AG04449 (cell line): ENCODE measurements at regions of chr2 and their contacts with region 1.

Region 1: DNA sequence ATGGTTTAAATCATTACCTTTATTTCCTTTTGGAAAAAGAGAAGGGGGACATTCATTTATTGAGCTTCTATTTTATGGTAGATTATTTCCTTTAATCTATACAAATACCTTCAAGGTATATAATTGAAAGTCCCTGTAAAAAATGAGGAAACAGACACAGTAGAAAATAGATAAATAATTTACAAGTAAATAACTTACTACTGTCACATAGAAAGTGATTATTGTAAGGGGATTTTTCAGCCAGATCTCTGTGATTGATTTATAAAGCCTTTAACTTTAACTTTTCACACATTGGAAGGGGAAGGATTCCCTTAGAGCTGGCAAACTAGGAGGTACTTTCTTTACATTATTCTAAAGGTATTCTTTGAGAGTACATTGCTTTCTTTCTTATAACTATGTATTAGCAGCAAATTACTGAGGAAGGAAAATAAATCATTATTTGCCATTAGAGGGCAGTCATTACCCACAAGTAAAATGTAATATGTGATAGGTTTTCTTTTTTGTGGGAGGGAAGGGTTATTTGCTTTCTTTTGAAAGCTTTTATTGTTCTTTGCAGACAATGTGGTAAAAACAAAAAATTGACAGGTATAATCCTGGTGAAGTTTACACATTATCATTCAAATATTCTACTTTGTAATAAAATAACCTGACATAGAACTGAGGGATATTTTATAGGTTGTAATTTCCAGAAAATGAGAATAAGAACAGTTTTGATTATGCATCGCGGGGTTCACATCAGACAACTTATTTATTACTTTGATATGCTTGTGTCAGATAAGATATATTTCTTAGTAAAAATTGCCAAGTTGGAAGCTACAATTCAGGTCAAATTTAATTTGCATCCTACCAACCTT is 24.8 kb upstream of the RPE start:
- DNase-seq: no peak
- H3K4me3 ChIP-seq: no peak overlapping the region
- CTCF ChIP-seq: peak; percentile 5

Region 2: GRCh38 chr2:209091056-209091455 is 886.6 kb before region 1 on chr2:
- CTCF ChIA-PET with region 1: no interaction called
- POLR2A ChIA-PET with region 1: no interaction called
- DNase-seq: no peak
- H3K4me3 ChIP-seq: no peak overlapping the region
- CTCF ChIP-seq: no peak

Region 3: DNA sequence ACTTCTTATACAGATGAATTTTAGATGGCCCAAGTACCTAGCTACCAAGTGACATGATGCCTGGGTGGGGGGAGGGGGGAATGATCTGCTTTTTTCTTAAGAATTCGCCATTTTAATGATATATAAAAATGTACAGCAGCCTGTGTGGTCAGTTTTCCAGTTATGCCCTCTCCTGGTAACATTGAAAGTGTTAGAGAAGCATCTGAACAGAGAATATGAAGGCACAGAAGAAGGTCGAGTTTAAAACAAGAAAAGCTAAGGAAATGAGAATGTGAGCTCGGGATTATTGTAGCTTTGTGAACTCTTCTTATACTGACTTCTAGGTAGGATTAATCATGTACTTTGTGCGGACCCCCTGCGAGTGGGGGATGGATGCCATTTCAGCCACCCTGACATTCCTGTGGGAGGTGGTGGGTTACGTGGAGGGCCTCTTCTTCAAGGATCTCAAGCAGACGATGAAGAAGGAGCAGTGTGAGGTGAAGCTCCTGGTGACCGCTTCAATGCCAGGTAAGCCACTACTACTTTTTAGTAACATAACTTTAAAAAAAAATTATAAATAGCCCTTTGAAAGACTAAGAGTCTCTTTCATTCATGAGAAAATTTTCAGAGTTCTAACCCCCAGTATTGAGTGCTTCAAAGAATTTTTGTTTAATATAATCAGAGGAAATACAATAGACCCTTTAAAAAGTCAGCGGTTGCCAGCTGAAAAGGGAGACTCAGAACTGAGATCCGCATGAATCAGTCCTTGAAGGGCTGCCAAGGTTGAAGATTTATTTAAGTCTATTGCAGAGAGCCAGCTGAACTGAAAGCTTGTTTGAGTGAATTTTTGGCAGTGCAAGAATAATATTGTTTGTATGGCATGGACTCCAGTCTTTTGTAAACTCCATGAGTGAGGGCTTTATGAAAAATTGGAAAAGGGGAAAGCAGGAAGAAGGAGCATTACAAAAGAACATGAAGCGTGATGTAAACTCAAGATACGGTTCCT is 43.8 kb before region 1 on chr2:
- CTCF ChIA-PET with region 1: no interaction called
- POLR2A ChIA-PET with region 1: no interaction called
- DNase-seq: no peak
- H3K4me3 ChIP-seq: no peak overlapping the region
- CTCF ChIP-seq: no peak

Region 4: DNA sequence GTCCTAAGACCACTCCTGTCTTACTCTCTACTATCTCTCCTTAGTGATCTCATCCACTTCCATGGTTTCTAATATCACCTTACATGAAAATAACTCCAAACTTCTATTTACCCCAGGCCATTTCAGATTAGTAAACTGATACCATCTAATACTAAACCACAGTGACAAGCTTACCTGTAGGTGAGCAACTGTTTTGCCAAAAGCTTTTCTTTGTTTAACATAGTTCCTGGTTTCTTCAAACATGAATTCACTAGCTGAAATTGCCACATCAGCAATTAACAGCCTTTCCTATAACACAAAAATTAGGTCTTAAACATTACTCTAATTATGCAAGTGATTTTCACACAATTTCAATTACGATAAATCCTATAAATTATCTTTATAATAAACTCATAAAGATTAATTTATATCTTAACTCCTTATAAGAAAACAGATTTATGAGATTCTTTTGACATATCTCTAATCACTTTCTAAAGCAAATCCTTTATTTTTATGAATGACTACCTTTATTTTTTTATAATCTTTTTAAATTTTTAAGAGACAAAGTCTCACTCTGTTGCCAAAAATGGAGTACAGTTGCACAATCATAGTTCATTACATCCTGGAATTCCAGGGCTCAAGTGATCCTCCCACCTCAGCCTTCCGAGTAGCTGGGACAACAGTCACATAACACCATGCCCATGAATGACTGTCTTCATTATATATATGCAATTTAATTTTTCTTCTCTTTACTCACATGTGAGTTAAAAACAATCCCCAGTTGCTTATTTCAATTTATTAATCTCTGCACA is 225.7 kb after region 1 on chr2:
- CTCF ChIA-PET with region 1: interaction called, 101 read pairs
- POLR2A ChIA-PET with region 1: no interaction called
- DNase-seq: no peak
- H3K4me3 ChIP-seq: no peak overlapping the region
- CTCF ChIP-seq: no peak

Region 5: DNA sequence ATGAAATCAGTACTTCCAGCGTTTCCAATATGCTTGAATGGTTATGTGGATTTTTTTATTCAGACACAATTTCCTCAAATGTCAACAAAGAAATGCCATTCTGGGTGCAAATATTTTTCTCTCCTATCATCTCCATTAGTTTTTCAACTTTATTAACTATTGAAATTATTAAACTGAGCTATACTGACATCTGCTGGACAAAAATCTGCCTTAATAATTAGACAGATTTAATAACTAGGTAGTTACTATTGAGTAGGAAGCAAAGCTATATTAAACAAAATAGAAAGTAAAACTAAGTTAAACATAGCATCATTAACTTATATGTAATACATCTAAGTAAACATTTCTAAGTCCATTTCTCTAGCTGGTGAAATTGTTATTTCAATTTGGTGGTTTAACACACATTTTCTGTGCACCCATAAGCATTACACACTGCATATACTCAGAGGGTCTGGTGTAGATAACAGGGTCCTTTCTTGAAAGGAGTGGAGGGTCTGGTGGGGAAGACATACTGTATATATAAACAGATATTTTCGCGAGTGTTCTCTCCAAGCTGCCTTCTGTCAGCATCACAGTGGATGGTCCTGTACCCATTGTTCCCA is 421.9 kb after region 1 on chr2:
- CTCF ChIA-PET with region 1: interaction called, 10 read pairs
- POLR2A ChIA-PET with region 1: no interaction called
- DNase-seq: no peak
- H3K4me3 ChIP-seq: no peak overlapping the region
- CTCF ChIP-seq: no peak

Region 6: DNA sequence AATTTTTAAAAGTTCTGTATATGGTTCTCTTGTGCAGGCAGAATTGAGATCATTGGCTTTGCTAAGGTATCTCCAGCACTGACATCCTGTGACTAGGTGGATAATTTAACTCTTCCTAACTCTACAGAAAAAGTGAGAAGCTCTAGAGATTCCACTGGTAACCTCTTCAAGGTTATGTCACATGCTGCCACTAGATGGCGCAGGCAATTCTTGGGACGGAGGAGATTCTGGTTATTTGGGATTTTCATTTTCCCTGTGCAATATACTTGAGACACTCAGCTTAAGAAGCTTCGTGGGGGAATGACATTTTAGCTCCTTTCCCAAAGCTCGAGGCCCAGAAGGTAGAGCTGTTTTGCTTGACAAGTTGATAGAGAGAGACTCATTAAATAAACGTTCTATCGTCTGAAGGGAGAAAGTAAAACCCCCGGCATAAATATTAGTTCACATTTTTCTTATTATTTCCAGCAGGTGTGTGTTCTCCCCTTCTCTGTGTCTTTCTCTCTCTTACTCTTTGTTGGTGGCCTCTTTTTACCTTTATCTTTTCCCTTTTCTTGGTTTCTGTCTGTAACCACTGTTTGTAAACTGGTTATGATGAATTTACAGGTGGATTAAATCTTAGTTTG is 525.5 kb after region 1 on chr2:
- CTCF ChIA-PET with region 1: no interaction called
- POLR2A ChIA-PET with region 1: no interaction called
- DNase-seq: no peak
- H3K4me3 ChIP-seq: no peak overlapping the region; the same call in 1 of the 2 replicates
- CTCF ChIP-seq: peak; percentile 72